ENCODE measurements at regions of chr19 and their contacts with region 1.

Region 1: DNA sequence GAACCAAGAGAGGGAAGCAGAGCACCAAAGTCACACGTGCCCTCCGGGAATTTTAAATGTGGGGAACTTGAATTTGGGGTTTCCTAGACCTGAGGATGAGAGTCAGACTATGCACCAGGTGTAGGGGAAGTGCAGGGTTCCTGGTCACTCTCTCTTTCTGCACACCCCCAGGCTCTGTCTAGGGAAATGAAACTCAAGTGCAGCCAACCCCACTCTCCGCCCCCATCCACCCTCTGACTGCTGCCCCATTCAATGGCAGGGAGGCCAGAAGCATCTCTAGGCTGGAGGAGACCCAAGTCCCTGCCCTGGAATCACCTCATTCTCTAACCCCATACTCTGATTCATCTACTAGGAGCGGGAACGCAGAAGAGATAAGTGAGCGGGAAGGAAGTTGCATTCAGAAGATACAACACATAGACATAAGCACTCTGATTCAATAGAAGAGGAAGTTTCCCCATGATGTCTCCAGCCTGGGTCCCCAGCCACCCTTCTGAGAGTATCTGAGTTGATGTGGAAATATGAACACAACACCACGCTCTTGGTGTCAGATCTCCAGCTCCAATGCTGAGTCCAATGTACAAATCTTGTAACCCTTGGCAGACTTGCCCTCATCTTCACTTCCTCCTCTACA is 4.7 kb upstream of the SIGLEC14 start:
- DNase-seq: peak; percentile 53
- ATAC-seq: peak; percentile 86
- H3K4me3 Mint-ChIP-seq: peak overlapping the region; percentile 33
- H3K27ac Mint-ChIP-seq: peak overlapping the region; percentile 81
- H3K4me1 Mint-ChIP-seq: peaks cover 61% of the 10 kb centered on the region
- H3K27me3 Mint-ChIP-seq: no peaks in the 10 kb centered on the region
- CTCF ChIP-seq: no peak

Region 2: DNA sequence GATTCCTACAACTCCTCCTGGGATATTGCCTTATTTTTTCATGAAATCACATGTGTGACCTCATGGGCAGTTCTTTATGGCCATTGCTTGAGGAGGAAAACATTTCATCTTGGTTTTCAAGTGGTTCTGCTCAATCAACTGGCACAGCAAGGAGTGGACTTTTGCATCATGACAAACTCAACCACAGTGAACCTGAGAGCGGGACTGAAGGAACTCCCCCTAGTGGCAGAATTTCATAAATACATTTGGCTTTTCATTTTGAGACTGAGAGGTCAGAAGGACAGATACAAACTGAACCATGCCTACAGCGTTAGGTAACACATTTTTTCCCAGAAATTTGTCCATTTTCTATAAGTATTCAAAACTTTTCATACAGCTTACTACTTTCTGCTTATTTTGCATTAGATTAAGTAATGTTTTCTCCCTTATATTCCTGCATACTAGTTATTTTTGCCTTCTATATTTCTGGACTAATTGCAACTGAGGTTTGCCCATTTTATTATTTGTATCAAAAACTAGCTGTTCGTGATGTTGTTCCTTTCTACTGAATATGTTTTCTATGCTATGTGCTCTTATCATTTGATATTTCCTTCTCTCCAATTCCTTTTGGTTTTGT is 136.4 kb before region 1 on chr19:
- CTCF ChIA-PET with region 1: interaction called, 10 read pairs
- POLR2A ChIA-PET with region 1: no interaction called
- intact Hi-C with region 1: no loop called
- DNase-seq: no peak
- ATAC-seq: no peak
- H3K4me3 Mint-ChIP-seq: no peak overlapping the region
- H3K27ac Mint-ChIP-seq: no peak overlapping the region
- H3K4me1 Mint-ChIP-seq: peaks cover 7% of the 10 kb centered on the region
- H3K27me3 Mint-ChIP-seq: peaks cover 2% of the 10 kb centered on the region
- CTCF ChIP-seq: peak; percentile 72

Region 3: GRCh38 chr19:51531349-51532315 is 119.7 kb before region 1 on chr19 and contains the start of gene SIGLEC6:
- CTCF ChIA-PET with region 1: interaction called, 4 read pairs
- POLR2A ChIA-PET with region 1: interaction called, 3 read pairs
- intact Hi-C with region 1: loop called (anchors 5 kb)
- DNase-seq: peak; percentile 60
- ATAC-seq: peak; percentile 97
- H3K4me3 Mint-ChIP-seq: peak within 1 kb of the TSS; percentile 83
- H3K27ac Mint-ChIP-seq: peak within 1 kb of the TSS; percentile 83
- H3K4me1 Mint-ChIP-seq: peaks cover 88% of the 10 kb centered on the region
- H3K27me3 Mint-ChIP-seq: no peaks in the 10 kb centered on the region
- CTCF ChIP-seq: no peak
- total RNA-seq, gene SIGLEC6: 16.4 and 28.7 TPM in 2 replicates

Region 4: GRCh38 chr19:51621178-51621577 is 30.2 kb before region 1 on chr19:
- CTCF ChIA-PET with region 1: interaction called, 4 read pairs
- POLR2A ChIA-PET with region 1: interaction called, 4 read pairs
- intact Hi-C with region 1: loop called (anchors 2 kb)
- DNase-seq: no peak
- ATAC-seq: peak; percentile 87
- H3K4me3 Mint-ChIP-seq: no peak overlapping the region
- H3K27ac Mint-ChIP-seq: peak overlapping the region; percentile 21
- H3K4me1 Mint-ChIP-seq: peaks cover 24% of the 10 kb centered on the region
- H3K27me3 Mint-ChIP-seq: no peaks in the 10 kb centered on the region
- CTCF ChIP-seq: no peak

Region 5: DNA sequence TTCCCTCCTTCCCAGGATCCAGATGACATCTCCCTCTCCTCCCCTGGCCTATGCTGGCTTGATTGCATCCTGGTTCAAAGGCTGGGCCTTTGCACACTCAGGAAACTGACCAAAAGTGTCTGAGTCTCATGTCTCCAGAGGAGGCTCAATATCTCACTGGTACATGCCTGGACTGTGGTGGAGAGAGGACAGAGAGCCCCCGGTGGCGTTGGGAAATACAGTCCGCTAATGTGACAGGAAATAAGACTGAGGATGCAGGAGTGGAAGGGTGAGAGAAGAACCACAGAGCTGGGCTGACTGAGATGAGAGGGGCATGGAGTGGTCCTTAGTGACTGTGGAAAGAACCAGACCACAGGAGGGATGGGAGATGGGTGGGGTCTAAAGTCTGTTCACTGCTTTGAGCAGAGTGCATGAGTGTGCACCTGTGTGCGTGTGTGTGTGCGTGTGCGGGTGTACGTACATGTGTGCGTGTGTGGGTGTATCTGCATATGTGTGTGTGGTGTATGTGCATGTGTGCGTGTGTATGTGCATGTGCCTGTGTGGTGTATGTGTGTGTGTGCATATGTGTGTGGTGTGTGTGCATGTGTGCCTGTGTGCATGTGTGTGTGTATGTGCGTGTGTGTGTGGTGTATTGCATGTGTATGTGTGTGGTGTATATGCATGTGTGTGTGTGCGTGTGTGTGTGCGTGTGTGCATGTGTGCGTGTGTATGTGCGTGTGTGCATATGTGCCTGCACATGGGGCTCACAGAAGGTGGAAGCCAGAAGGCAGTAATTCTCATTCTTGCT is 23.0 kb before region 1 on chr19:
- CTCF ChIA-PET with region 1: no interaction called
- POLR2A ChIA-PET with region 1: interaction called, 6 read pairs
- intact Hi-C with region 1: loop called (anchors 1 kb)
- DNase-seq: no peak
- ATAC-seq: no peak
- H3K4me3 Mint-ChIP-seq: peak overlapping the region; percentile 53
- H3K27ac Mint-ChIP-seq: peak overlapping the region; percentile 27
- H3K4me1 Mint-ChIP-seq: peaks cover 30% of the 10 kb centered on the region
- H3K27me3 Mint-ChIP-seq: no peaks in the 10 kb centered on the region
- CTCF ChIP-seq: no peak

Region 6: GRCh38 chr19:51777570-51778462 is 126.5 kb after region 1 on chr19:
- CTCF ChIA-PET with region 1: no interaction called
- POLR2A ChIA-PET with region 1: no interaction called
- intact Hi-C with region 1: loop called (anchors 5 kb)
- DNase-seq: no peak
- ATAC-seq: peak; percentile 61
- H3K4me3 Mint-ChIP-seq: no peak overlapping the region
- H3K27ac Mint-ChIP-seq: no peak overlapping the region
- H3K4me1 Mint-ChIP-seq: peaks cover 4% of the 10 kb centered on the region
- H3K27me3 Mint-ChIP-seq: peaks cover 56% of the 10 kb centered on the region
- CTCF ChIP-seq: no peak

Region 7: DNA sequence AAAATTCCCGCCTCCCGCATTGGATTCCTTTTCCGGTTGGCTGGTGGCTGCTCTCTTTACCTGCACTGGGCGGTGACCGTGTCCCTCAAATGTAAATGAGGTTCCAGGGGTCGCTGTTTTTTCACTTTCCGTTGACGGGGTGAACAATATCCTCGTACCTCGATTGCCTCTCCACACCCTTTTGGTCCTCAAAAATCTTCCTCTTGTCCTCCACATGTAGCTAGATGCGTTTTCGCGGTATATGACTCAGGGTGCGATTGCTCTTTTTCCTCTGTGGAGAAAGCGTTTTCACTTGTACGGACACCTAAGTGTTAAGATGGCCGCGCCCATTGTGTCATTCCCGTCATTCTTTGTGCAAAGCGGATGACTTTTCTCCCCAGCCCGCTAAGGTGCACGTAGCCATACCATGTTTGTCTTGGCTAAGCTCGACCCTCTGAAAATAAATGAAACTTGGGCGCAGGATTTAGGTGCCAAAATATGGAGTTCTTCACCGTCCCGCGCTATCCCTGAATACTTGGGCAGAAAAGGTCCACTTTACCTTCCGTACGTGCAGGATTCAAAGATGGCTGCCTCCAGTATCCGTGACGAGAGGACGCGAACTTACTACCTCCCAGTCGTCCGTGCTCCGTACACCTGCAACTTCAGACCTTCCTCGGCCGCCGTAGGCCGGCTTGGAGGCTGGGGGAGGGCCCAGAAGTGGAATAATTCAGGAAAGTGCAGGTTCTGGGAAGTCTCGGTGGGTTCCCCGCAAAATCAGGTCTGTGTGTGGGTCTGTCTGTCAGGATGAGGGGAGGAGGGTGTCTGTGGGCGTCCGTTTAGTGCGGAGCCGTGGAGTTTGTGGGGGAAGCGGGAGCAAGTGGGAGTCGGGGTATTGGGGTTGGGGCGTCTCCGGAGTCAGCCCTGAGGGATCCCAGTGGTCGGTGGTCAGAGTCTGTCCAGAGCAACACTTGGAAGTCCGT is 275.7 kb after region 1 on chr19 and contains the start of gene ZNF613:
- CTCF ChIA-PET with region 1: no interaction called
- POLR2A ChIA-PET with region 1: no interaction called
- intact Hi-C with region 1: no loop called
- DNase-seq: peak; percentile 71
- ATAC-seq: peak; percentile 94
- H3K4me3 Mint-ChIP-seq: peak within 1 kb of the TSS; percentile 100
- H3K27ac Mint-ChIP-seq: peak within 1 kb of the TSS; percentile 93
- H3K4me1 Mint-ChIP-seq: peaks cover 24% of the 10 kb centered on the region
- H3K27me3 Mint-ChIP-seq: no peaks in the 10 kb centered on the region
- CTCF ChIP-seq: no peak
- total RNA-seq, gene ZNF613: 7.7 and 7.8 TPM in 2 replicates

Region 8: DNA sequence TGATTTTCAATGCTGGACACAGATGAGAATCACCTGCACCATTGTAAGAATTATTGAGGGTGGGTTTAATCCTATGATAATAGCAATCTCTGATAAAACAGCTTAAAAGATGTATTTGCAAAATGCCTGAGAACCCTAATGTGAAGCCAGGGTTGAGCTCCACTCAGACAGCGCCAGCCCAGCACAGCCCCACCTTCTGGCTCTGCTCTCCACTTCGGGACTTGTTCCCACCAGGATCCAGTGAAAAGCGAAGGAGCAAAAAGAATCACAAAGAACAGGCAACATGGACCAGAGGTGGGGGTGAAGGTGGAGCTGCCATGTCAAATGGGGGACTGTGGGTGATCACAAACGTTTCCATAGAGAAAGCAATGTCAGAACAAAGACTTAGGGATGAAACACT is 1330.0 kb after region 1 on chr19:
- CTCF ChIA-PET with region 1: no interaction called
- POLR2A ChIA-PET with region 1: no interaction called
- intact Hi-C with region 1: no loop called
- DNase-seq: no peak
- ATAC-seq: no peak
- H3K4me3 Mint-ChIP-seq: no peak overlapping the region
- H3K27ac Mint-ChIP-seq: no peak overlapping the region
- H3K4me1 Mint-ChIP-seq: no peaks in the 10 kb centered on the region
- H3K27me3 Mint-ChIP-seq: no peaks in the 10 kb centered on the region
- CTCF ChIP-seq: no peak